Natural killer cell (primary cell): ENCODE measurements at regions of chr1 and their contacts with region 1.

Region 1: GRCh38 chr1:198520524-198521254 is 19.8 kb downstream of the ATP6V1G3 start:
- DNase-seq: peak in 1 of 2 donors; percentile 60
- ATAC-seq: peak; percentile 77 to 84 (median 83)
- H3K4me3 ChIP-seq: peak overlapping the region; percentile 24
- H3K4me3 Mint-ChIP-seq: peak overlapping the region; percentile 82
- H3K27ac ChIP-seq: peak overlapping the region; percentile 93
- H3K27ac Mint-ChIP-seq: peak overlapping the region; percentile 88 to 89
- H3K4me1 ChIP-seq: peaks cover 27% of the 10 kb centered on the region
- H3K4me1 Mint-ChIP-seq: peaks cover 75 to 80% of the 10 kb centered on the region in 2 donors
- H3K27me3 ChIP-seq: no peaks in the 10 kb centered on the region
- H3K27me3 Mint-ChIP-seq: no peaks in the 10 kb centered on the region
- CTCF ChIP-seq: no peak

Region 2: DNA sequence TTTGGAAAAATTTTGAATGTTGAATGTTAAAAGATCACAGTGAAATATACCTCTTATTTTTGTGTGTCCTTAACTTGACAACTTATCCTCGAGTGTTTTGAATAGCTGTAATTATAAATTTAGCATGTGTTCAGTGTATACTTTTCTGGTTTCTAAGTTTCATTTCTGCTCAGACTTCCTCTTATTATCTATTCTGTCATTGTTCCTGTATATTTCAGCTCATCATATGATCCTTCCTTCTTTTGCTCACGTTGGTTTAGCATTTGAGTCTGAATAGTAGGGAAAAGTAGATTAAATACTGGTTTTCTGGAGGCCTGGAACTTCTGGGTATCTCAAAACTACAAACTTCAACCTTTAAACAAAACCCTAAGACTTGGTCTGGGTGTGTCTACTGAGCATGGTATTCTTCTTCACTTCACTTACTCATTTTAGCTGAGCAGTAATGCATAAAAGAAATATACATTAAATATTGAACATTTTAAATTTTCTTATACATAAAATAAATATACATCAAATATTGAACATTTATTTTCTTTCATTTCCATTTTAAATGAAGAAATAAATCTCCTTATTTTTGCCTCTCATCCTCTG is 23.1 kb after region 1 on chr1:
- intact Hi-C with region 1: no loop called
- DNase-seq: no peak
- ATAC-seq: no peak
- H3K4me3 ChIP-seq: no peak overlapping the region
- H3K4me3 Mint-ChIP-seq: no peak overlapping the region
- H3K27ac ChIP-seq: peak overlapping the region; percentile 72
- H3K27ac Mint-ChIP-seq: peak overlapping the region; percentile 49 to 78
- H3K4me1 ChIP-seq: no peaks in the 10 kb centered on the region
- H3K4me1 Mint-ChIP-seq: peaks cover 26 to 31% of the 10 kb centered on the region in 2 donors
- H3K27me3 ChIP-seq: no peaks in the 10 kb centered on the region
- H3K27me3 Mint-ChIP-seq: no peaks in the 10 kb centered on the region
- CTCF ChIP-seq: no peak

Region 3: DNA sequence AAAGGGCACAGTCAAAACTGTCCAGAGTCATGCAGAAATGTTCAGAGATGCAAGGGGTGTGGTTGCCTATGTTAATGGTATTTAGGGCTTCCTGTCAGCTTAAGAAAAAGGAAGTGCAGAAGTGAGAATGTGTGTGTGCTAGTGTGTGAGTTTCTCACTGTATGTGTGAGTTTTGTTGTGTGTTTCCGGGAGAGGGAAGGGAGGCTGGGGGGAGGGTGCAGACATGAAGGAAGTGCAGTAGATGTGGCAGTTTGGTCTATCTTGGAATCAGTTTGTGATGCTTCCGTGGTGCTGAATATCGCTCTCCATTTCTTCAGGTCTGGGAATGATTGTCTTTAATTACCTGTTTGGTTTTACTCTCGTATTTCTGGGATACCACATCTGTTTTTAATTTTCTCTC is 36.3 kb after region 1 on chr1:
- intact Hi-C with region 1: loop called (anchors 1 kb)
- DNase-seq: peak; percentile 57 to 89
- ATAC-seq: peak; percentile 85 to 96 (median 93)
- H3K4me3 ChIP-seq: no peak overlapping the region
- H3K4me3 Mint-ChIP-seq: peak overlapping the region; percentile 78
- H3K27ac ChIP-seq: peak overlapping the region; percentile 66
- H3K27ac Mint-ChIP-seq: peak overlapping the region; percentile 78 to 79
- H3K4me1 ChIP-seq: peaks cover 23% of the 10 kb centered on the region
- H3K4me1 Mint-ChIP-seq: peaks cover 66 to 67% of the 10 kb centered on the region in 2 donors
- H3K27me3 ChIP-seq: no peaks in the 10 kb centered on the region
- H3K27me3 Mint-ChIP-seq: no peaks in the 10 kb centered on the region
- CTCF ChIP-seq: no peak

Region 4: DNA sequence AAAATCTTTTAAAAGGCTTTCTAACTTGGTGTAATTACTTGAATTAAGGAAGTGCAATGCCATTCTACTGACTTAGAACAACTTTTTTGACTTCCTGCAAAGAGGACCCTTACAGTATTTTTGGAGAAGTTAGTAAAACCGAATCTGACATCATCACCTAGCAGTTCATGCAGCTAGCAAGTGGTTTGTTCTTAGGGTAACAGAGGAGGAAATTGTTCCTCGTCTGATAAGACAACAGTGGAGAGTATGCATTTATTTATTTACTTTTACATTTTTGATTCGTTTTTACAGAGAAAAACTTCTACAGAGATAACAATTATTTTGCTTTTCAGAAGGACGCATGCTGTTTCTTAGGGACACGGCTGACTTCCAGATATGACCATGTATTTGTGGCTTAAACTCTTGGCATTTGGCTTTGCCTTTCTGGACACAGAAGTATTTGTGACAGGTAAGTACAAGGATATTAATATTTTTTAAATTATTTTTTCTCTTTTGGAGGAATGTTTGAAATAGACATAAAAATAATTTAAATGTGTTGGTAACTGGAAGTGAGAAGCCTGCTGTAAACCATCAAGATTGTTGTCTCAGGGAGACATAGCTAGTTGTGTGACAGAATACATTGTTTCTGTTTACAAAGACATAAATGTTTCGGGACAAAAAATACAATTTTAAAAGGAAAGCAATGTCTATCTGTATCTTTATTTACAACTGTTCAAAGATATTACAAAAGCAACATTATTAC is 118.4 kb after region 1 on chr1 and contains the start of gene PTPRC:
- intact Hi-C with region 1: loop called (anchors 5 kb)
- DNase-seq: peak in 1 of 2 donors; percentile 77
- ATAC-seq: peak; percentile 64 to 84 (median 74)
- H3K4me3 ChIP-seq: peak within 1 kb of the TSS; percentile 99
- H3K4me3 Mint-ChIP-seq: peak within 1 kb of the TSS; percentile 99
- H3K27ac ChIP-seq: peak within 1 kb of the TSS; percentile 80
- H3K27ac Mint-ChIP-seq: peak within 1 kb of the TSS; percentile 90 to 94
- H3K4me1 ChIP-seq: peaks cover 18% of the 10 kb centered on the region
- H3K4me1 Mint-ChIP-seq: peaks cover 60 to 61% of the 10 kb centered on the region in 2 donors
- H3K27me3 ChIP-seq: no peaks in the 10 kb centered on the region
- H3K27me3 Mint-ChIP-seq: no peaks in the 10 kb centered on the region
- CTCF ChIP-seq: no peak
- total RNA-seq, gene PTPRC: 1,142 to 1,334 (median 1,200) TPM

Region 5: GRCh38 chr1:198681831-198682759 is 161.4 kb after region 1 on chr1:
- intact Hi-C with region 1: loop called (anchors 2 kb)
- DNase-seq: peak; percentile 63 to 96
- ATAC-seq: peak; percentile 66 to 93 (median 86)
- H3K4me3 ChIP-seq: peak overlapping the region; percentile 21
- H3K4me3 Mint-ChIP-seq: peak overlapping the region; percentile 78
- H3K27ac ChIP-seq: peak overlapping the region; percentile 90
- H3K27ac Mint-ChIP-seq: peak overlapping the region; percentile 88 to 90
- H3K4me1 ChIP-seq: peaks cover 27% of the 10 kb centered on the region
- H3K4me1 Mint-ChIP-seq: peaks cover 82 to 83% of the 10 kb centered on the region in 2 donors
- H3K27me3 ChIP-seq: no peaks in the 10 kb centered on the region
- H3K27me3 Mint-ChIP-seq: no peaks in the 10 kb centered on the region
- CTCF ChIP-seq: no peak

Region 6: DNA sequence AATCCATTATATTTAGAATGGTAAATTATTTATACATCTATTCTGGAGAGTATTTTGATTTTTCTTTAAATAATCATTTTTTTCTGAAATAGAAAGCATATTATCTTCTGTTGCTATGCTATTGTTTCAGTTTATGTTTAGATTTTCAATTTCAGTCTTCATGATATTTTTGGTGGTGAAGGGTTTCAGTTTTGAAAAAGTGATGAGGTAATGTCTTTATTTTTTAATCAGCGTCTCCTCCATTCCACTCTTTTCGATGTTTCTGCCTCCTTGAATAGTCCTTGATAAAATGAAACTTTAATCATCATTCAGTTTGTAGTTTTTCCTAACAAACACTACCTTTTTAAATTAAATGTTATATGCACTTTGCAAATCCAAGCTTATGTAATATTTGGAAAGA is 546.8 kb after region 1 on chr1:
- intact Hi-C with region 1: no loop called
- DNase-seq: no peak
- ATAC-seq: no peak
- H3K4me3 ChIP-seq: no peak overlapping the region
- H3K4me3 Mint-ChIP-seq: no peak overlapping the region
- H3K27ac ChIP-seq: no peak overlapping the region
- H3K27ac Mint-ChIP-seq: no peak overlapping the region
- H3K4me1 ChIP-seq: no peaks in the 10 kb centered on the region
- H3K4me1 Mint-ChIP-seq: peaks cover 0 to 5% of the 10 kb centered on the region in 2 donors
- H3K27me3 ChIP-seq: no peaks in the 10 kb centered on the region
- H3K27me3 Mint-ChIP-seq: peaks cover 0 to 7% of the 10 kb centered on the region in 2 donors
- CTCF ChIP-seq: no peak